ENCODE measurements at regions of chr12 and their contacts with region 1.

Region 1: DNA sequence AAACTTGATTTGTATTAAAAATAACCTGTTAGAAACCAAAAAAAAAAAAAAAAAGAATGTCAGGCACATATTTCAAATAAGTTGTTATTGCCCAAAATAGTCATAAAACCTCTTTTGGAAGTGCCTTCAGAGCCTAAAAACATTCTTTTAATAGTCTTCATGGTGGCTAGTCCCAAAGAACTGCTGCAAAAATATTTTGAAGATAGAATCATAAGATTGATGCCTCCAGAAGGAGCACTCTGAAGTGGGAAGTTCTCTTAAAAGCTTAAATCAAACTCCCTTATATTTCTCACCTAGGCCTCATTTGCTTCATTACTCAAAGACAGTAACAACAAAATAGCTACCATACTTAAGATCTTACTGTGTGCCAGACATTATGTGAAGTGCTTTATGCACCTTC is 27.2 kb upstream of the NT5DC3 start:
- DNase-seq: no peak

Region 2: DNA sequence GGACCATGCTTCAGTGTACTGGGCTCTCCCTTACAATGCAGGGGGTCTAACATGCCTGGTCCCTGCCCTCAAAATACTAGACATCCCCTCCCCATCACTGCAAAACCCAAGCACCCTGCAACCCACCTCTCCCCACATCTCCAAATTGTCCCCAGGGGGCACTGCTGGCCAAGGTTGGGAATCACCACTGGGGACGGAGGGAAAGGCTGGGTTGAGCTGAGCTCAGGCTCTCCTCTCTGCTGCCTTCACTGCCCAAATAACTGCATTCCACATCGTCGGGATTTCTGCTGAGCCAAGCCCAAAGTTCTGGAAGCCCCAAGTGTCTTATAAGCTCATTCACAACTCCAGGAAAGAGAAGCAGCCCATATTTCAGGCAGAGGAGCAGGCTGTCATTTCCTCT is 96.7 kb before region 1 on chr12:
- intact Hi-C with region 1: loop called (anchors 5 kb)
- DNase-seq: peak in 7 of 10 donors; percentile 34 to 91 (median 45)

Measured in posterior cingulate gyrus (tissue), 11 donors.